Cardiac septum (tissue), 1 donor: ENCODE measurements at regions of chr12 and their contacts with region 1.

Region 1: GRCh38 chr12:80763874-80764273 is 47.2 kb downstream of the MYF5 start:
- DNase-seq: no peak

Region 2: DNA sequence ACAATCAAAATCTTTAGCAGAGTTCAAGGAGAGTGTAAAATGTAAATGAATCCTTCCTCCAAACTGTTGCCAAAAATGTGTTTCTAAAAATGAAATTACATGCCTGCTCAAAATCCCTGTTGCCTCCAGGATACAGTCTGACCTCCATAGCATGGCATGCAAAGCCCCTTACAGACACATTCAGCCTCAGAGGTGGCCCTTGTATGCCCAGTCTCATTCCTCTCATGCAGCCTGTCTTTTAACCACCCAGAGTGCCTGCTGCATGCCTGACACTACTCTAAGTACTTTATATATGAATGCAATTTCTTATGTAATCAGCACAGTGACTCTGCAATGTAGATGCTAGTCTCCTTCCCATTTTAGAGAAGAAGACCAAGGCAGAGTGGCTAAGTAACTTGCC is 344.2 kb before region 1 on chr12:
- intact Hi-C with region 1: loop called (anchors 5 kb)
- DNase-seq: no peak

Region 3: DNA sequence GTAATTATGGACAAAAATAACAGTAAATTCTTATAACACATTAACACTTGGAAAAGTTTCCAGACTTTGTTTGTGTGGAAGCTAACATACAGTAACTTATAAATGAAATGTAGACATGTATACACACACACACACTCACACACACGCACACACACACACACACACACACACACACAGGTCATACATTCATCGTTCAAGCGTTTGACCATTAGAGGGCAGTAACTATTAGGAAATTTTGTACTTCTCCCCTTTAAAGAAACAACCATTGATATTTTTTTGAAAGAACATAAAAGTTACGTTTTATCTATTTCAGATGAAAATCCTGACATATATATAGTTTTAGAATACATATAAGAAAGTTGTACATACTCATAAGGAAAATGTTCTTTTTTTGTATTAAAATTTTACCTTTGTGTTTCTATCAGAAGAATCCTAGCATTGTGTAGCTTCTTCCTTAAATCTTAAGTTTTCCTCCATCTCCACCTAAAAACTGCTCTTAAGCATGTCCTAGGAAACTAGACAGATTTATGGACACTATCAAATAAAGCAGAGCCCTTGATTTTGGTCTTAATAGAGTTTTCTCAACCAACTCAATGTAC is 290.9 kb before region 1 on chr12:
- intact Hi-C with region 1: loop called (anchors 1 kb)
- DNase-seq: no peak

Region 4: GRCh38 chr12:80607361-80608135 is 156.3 kb before region 1 on chr12:
- intact Hi-C with region 1: no loop called
- DNase-seq: no peak

Region 5: DNA sequence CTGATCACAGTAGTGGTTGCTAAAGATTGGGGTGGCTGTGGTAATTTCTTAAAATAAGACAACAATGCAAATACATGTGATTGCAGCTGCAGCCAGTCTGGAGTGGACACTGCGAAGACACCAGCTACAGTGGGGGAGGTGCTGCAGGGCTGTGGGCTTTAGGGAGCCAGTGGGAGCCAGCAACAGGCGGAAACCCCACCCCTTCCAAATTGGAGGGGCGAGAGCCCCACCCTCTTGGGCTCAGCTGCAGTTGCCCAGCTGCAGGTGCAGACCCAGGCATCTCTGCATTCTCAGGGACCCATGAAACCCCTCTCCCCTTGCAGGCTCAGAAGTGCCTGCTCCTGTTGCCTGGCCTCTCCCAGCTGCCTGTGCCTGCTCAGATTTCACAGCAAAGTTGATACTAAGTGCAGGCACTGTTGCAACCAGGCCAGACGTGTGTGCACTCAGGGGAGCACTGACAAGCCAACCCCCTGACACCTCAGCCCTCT is 57.7 kb after region 1 on chr12:
- intact Hi-C with region 1: no loop called
- DNase-seq: no peak

Region 6: GRCh38 chr12:81100611-81101169 is 336.8 kb after region 1 on chr12:
- intact Hi-C with region 1: no loop called
- DNase-seq: no peak